ENCODE measurements at regions of chr3 and their contacts with region 1.

Region 1: GRCh38 chr3:87006844-87007439 is 16.0 kb upstream of the VGLL3 start:
- DNase-seq: peak; percentile 50
- ATAC-seq: peak; percentile 65
- H3K4me3 ChIP-seq: no peak overlapping the region
- H3K27ac ChIP-seq: no peak overlapping the region
- H3K4me1 ChIP-seq: no peaks in the 10 kb centered on the region
- H3K27me3 ChIP-seq: no peaks in the 10 kb centered on the region
- CTCF ChIP-seq: peak; percentile 52
- POLR2A ChIP-seq: no peak
- RAD21 ChIP-seq: peak; percentile 45

Region 2: GRCh38 chr3:87062685-87063084 is 55.7 kb after region 1 on chr3:
- CTCF ChIA-PET with region 1: no interaction called
- POLR2A ChIA-PET with region 1: no interaction called
- dilution Hi-C with region 1: no loop called
- in situ Hi-C with region 1: no loop called
- intact Hi-C with region 1: loop called (anchors 5 kb)
- DNase-seq: no peak
- ATAC-seq: no peak
- H3K4me3 ChIP-seq: no peak overlapping the region
- H3K27ac ChIP-seq: no peak overlapping the region
- H3K4me1 ChIP-seq: no peaks in the 10 kb centered on the region
- H3K27me3 ChIP-seq: peaks cover 6% of the 10 kb centered on the region
- CTCF ChIP-seq: no peak
- POLR2A ChIP-seq: no peak
- RAD21 ChIP-seq: no peak

Region 3: DNA sequence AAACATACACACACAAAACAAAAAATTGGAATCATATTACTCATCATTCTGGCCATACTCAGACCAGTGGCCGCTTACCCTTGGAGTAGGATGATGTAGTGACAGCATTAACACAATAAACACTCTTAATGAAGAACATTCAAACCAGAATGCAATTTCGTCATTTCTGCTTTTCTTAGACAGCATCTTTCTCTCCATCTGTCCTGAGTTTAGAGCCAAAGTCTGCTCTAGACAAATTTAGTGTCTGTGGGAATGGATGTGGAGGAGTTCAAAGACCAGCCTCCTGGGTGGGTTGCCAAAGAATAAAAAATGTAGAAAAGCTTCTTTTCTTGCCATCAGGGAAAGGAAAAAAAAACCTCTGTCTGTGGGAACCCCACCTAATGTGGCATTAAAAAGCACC is 481.8 kb after region 1 on chr3:
- CTCF ChIA-PET with region 1: no interaction called
- POLR2A ChIA-PET with region 1: no interaction called
- dilution Hi-C with region 1: no loop called
- in situ Hi-C with region 1: no loop called
- intact Hi-C with region 1: no loop called
- DNase-seq: no peak
- ATAC-seq: no peak
- H3K4me3 ChIP-seq: no peak overlapping the region
- H3K27ac ChIP-seq: no peak overlapping the region
- H3K4me1 ChIP-seq: no peaks in the 10 kb centered on the region
- H3K27me3 ChIP-seq: no peaks in the 10 kb centered on the region
- CTCF ChIP-seq: no peak
- POLR2A ChIP-seq: no peak
- RAD21 ChIP-seq: no peak

Measured in IMR-90 (cell line).